ENCODE measurements at regions of chrX and their contacts with region 1.

Region 1: DNA sequence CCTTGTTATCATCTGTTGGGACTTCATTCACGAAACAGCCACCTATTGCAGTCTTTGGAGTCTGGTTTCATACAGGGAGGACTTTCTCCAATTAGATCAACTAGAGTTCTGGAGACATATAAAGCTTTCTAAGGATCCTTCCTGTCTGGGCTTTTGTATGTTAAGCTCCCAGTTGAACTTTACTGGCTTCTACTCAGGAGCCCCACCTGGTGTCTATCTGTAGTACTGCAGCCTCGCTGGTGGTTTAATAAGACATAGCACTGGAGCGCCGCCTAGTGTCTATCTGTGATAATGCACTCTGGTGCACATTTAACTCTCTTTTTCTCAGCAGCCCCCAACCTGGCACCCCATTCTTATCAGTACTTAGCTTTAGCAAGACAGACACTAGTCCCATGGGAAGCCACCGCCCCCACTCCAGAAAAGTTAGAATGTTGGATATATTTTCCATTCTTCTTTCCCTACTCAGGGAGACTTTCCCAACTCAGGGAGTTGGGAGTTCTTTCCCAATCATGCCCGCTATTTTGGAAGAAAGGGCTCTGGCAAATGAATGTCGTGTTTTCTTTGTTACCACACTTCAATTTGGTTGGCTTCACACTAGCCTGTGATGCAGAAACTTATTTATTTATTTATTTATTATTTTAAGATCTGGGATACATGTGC is 36.9 kb upstream of the SYTL4 start:
- DNase-seq: peak; percentile 23 to 83 (median 55)
- ATAC-seq: peak; percentile 100
- H3K4me3 ChIP-seq: no peak overlapping the region
- H3K27ac ChIP-seq: no peak overlapping the region
- H3K4me1 ChIP-seq: no peaks in the 10 kb centered on the region
- H3K27me3 ChIP-seq: no peaks in the 10 kb centered on the region
- CTCF ChIP-seq: peak; percentile 87 to 100

Region 2: DNA sequence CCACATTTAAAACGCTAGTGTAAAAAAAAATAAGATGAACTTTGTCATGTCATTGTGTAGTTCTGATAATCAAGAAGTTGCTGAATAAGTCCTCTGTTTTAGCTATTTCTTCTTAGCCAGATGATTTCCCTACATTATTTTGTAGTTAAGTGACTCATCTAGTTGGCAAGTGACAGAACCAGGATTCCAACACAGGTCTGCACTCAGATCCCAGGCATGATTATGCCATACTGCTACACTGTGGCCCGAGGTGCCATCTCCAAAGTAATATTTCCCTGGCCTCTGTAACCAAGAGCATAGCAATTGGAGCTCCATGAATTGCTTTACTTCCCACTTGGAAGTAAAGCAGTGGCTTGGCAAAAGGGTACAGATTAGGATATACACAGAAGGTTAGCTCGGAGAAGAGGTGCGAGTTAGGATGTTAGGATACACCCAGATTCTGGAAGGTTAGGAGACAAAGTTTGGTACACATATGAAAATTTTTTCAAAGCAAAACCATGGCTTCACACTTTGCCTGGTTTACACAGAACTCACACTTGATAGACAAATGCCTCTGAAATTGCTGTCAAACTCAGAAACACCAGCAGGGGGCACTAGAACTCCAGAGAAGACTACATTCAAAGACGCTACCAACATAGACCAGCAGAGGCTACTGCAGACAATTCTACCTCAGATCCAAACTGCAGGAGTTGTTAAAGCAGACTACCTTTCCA is 83.4 kb before region 1 on chrX:
- intact Hi-C with region 1: loop called in 1 of 2 experiments (anchors 5 kb)
- DNase-seq: peak in 2 of 4 donors; percentile 59 to 70
- ATAC-seq: peak; percentile 98
- H3K4me3 ChIP-seq: no peak overlapping the region
- H3K27ac ChIP-seq: no peak overlapping the region
- H3K4me1 ChIP-seq: no peaks in the 10 kb centered on the region
- H3K27me3 ChIP-seq: peaks cover 0 to 3% of the 10 kb centered on the region in 2 donors
- CTCF ChIP-seq: peak; percentile 61 to 94

Region 3: DNA sequence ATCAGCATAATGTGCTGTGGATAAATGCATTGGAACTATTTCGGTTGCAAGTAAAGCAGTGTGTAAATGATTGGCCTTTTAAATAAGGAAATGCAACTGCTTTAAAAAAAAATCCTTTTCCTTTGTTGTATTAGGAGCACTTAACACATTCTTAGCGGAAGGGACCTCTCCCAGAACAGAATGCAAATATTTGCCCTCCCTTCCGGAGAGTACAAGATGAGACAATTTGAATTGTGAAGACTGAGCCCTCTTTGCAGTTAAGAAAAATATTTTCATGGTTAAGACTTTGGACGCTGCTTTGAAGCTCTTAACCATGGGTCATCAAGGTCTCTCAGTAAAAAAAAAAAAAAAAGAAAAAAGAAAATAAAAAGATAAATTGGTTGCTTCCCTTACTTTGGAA is 114.8 kb after region 1 on chrX:
- intact Hi-C with region 1: no loop called
- DNase-seq: no peak
- ATAC-seq: peak; percentile 74
- H3K4me3 ChIP-seq: no peak overlapping the region
- H3K27ac ChIP-seq: no peak overlapping the region
- H3K4me1 ChIP-seq: no peaks in the 10 kb centered on the region
- H3K27me3 ChIP-seq: no peaks in the 10 kb centered on the region
- CTCF ChIP-seq: no peak

Measured in left lung (tissue), 14 donors.